ENCODE measurements at regions of chr13 and their contacts with region 1.

Region 1: DNA sequence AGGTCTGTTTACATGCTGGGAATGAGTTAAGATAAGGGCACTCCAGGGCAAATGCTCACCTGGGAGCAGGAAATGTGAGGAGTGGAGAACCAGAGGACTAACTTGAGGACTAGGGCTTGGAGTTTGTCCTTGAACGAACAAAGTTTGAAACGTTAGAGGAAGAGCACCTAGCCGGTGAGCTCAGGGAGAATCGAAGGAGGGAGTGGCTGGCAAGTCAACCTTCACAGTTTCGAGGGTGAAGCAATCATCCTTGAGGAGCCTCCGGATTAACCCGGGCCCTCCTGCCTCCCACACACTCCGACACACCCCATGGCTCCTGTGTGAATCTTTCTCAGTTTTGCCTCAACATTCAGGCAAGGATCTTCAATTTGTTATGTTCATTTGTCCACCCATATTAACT is 58.6 kb downstream of the LMO7 start:
- DNase-seq: no peak
- ATAC-seq: no peak
- H3K4me3 ChIP-seq: no peak overlapping the region
- H3K27ac ChIP-seq: peak overlapping the region; percentile 4; the same call in 1 of the 2 replicates
- H3K4me1 ChIP-seq: peaks cover 18% of the 10 kb centered on the region
- H3K27me3 ChIP-seq: no peaks in the 10 kb centered on the region
- CTCF ChIP-seq: no peak
- POLR2A ChIP-seq: no peak
- RAD21 ChIP-seq: no peak

Region 2: GRCh38 chr13:75812751-75813181 is 118.0 kb after region 1 on chr13:
- CTCF ChIA-PET with region 1: interaction called, 4 read pairs
- POLR2A ChIA-PET with region 1: no interaction called
- dilution Hi-C with region 1: no loop called
- in situ Hi-C with region 1: no loop called
- intact Hi-C with region 1: loop called (anchors 5 kb)
- DNase-seq: peak; percentile 35
- ATAC-seq: no peak
- H3K4me3 ChIP-seq: no peak overlapping the region
- H3K27ac ChIP-seq: peak overlapping the region; percentile 40; the same call in 1 of the 2 replicates
- H3K4me1 ChIP-seq: peaks cover 12% of the 10 kb centered on the region
- H3K27me3 ChIP-seq: no peaks in the 10 kb centered on the region
- CTCF ChIP-seq: no peak
- POLR2A ChIP-seq: no peak
- RAD21 ChIP-seq: no peak

Region 3: GRCh38 chr13:75864718-75865117 is 170.0 kb after region 1 on chr13:
- CTCF ChIA-PET with region 1: interaction called, 5 read pairs
- POLR2A ChIA-PET with region 1: no interaction called
- dilution Hi-C with region 1: no loop called
- in situ Hi-C with region 1: no loop called
- intact Hi-C with region 1: loop called (anchors 5 kb)
- DNase-seq: peak; percentile 93
- ATAC-seq: peak; percentile 55
- H3K4me3 ChIP-seq: no peak overlapping the region
- H3K27ac ChIP-seq: no peak overlapping the region
- H3K4me1 ChIP-seq: peaks cover 19% of the 10 kb centered on the region
- H3K27me3 ChIP-seq: no peaks in the 10 kb centered on the region
- CTCF ChIP-seq: no peak
- POLR2A ChIP-seq: no peak
- RAD21 ChIP-seq: no peak

Region 4: GRCh38 chr13:76129305-76130000 is 434.7 kb after region 1 on chr13:
- CTCF ChIA-PET with region 1: no interaction called
- POLR2A ChIA-PET with region 1: no interaction called
- dilution Hi-C with region 1: no loop called
- in situ Hi-C with region 1: no loop called
- intact Hi-C with region 1: no loop called
- DNase-seq: no peak
- ATAC-seq: no peak
- H3K4me3 ChIP-seq: no peak overlapping the region
- H3K27ac ChIP-seq: no peak overlapping the region
- H3K4me1 ChIP-seq: no peaks in the 10 kb centered on the region
- H3K27me3 ChIP-seq: peaks cover 2% of the 10 kb centered on the region; the same call in 1 of the 2 replicates
- CTCF ChIP-seq: no peak
- POLR2A ChIP-seq: no peak
- RAD21 ChIP-seq: no peak